GM12878 (cell line): ENCODE measurements at regions of chr1 and their contacts with region 1.

Region 1: GRCh38 chr1:27671964-27672749 is at the start of gene IFI6:
- DNase-seq: peak; percentile 86
- ATAC-seq: peak; percentile 94
- H3K4me3 ChIP-seq: peak within 1 kb of the TSS; percentile 89
- H3K27ac ChIP-seq: peak within 1 kb of the TSS; percentile 73
- H3K4me1 ChIP-seq: peaks cover 9% of the 10 kb centered on the region
- H3K27me3 ChIP-seq: no peaks in the 10 kb centered on the region
- CTCF ChIP-seq: peak; percentile 35 to 39 (median 38); a peak in 3 of 6 replicates
- EP300 ChIP-seq: no peak
- POLR2A ChIP-seq: peak; percentile 91
- RAD21 ChIP-seq: no peak
- polyA plus RNA-seq, gene IFI6: 5.6 to 21.0 TPM

Region 2: DNA sequence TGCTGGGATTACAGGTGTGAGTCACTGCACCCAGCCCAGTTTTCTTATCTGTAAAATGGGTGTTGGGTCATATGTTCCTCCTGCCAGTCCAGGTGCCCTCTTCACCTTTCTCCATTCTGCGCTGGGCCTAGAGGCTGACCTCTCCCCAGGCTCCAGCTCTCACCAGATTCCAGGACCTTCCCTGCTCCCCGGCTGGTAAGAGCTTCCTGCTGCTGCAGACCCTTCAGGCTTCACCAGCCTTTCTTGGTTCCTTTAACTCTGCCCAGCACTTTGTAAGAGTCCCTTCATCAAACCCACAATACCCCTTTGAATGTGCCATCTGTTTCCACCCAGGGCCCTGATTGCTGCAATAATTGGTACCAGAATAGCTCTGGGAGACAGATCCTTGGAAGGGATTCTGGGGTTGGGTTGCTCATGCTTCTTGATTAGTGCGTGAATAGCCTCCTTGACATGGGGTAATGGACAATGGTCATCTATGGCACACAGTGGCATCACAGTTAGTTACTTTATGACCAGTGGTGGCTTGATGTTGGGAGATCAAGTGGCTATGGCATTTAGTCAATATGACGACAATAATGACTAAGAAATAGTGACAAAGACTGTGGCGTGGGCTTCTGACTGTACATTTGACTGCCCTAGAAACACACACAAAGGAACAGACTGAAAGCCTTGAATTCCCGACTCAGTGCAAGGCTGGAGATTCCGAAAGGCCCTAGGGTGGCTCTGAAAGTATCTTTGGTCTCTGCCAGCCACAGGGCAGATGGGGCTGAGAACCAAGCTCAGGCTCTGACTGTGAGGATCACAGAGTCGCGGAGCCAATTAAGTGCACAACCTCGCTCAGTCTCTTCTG is 584.6 kb before region 1 on chr1:
- CTCF ChIA-PET with region 1: no interaction called
- POLR2A ChIA-PET with region 1: no interaction called
- RAD21 ChIA-PET with region 1: no interaction called
- SMC1A ChIA-PET with region 1: no interaction called
- in situ Hi-C with region 1: no loop called
- intact Hi-C with region 1: no loop called
- DNase-seq: no peak
- ATAC-seq: no peak
- H3K4me3 ChIP-seq: no peak overlapping the region
- H3K27ac ChIP-seq: no peak overlapping the region
- H3K4me1 ChIP-seq: no peaks in the 10 kb centered on the region
- H3K27me3 ChIP-seq: 0 out of 4 replicates have a peak, but pooled peaks cover 0 to 2% of the 10 kb centered on the region in 2 experiments
- CTCF ChIP-seq: no peak
- EP300 ChIP-seq: no peak
- POLR2A ChIP-seq: no peak
- RAD21 ChIP-seq: no peak

Region 3: DNA sequence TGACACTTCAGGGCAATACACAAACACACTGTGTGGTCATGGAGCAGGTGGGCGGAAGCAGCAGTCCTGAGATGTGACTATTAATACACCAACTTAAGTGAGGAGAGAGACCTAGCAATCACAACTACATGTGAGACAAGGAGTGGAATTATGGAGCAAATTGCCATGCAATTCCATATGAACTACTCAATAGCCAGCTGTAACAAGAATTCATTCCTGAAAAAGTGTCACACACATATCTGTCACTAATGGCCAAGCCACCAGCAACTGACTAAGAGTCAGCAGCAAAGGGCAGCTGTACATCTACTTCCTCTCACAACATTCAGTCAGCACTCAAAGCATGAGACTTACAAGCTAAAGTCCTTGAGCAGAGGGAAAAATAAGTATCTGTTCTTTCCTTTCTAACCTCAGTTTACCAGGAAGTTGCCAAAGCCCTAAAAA is 233.5 kb before region 1 on chr1:
- CTCF ChIA-PET with region 1: no interaction called
- POLR2A ChIA-PET with region 1: no interaction called
- RAD21 ChIA-PET with region 1: no interaction called
- SMC1A ChIA-PET with region 1: no interaction called
- in situ Hi-C with region 1: no loop called
- intact Hi-C with region 1: no loop called
- DNase-seq: no peak
- ATAC-seq: peak; percentile 42
- H3K4me3 ChIP-seq: peak overlapping the region; percentile 24
- H3K27ac ChIP-seq: peak overlapping the region; percentile 82
- H3K4me1 ChIP-seq: peaks cover 75% of the 10 kb centered on the region
- H3K27me3 ChIP-seq: no peaks in the 10 kb centered on the region
- CTCF ChIP-seq: no peak
- EP300 ChIP-seq: no peak
- POLR2A ChIP-seq: no peak
- RAD21 ChIP-seq: no peak

Region 4: DNA sequence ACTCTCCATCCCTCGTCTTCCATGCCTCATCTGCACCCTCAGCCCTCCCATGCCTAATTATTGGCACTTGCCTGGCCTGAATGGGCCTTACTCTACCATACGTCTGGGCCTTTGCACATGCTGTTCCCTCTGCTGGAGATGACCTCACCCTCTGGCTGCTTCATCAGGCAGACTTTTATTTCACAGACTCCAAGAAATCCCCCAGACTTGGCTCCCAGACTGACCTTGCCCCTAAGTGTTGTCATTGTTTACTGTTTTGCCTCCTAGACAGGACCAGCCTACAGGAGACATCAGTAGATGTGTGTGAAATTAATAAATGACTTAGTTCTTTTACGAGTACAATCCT is 63.0 kb before region 1 on chr1:
- CTCF ChIA-PET with region 1: interaction called, 327 read pairs
- POLR2A ChIA-PET with region 1: interaction called, 8 read pairs
- RAD21 ChIA-PET with region 1: interaction called, 268 read pairs
- SMC1A ChIA-PET with region 1: interaction called, 248 read pairs
- in situ Hi-C with region 1: no loop called
- intact Hi-C with region 1: no loop called
- DNase-seq: no peak
- ATAC-seq: peak; percentile 41
- H3K4me3 ChIP-seq: no peak overlapping the region
- H3K27ac ChIP-seq: peak overlapping the region; percentile 78
- H3K4me1 ChIP-seq: peaks cover 46% of the 10 kb centered on the region
- H3K27me3 ChIP-seq: no peaks in the 10 kb centered on the region
- CTCF ChIP-seq: no peak
- EP300 ChIP-seq: no peak
- POLR2A ChIP-seq: peak; percentile 57; the same call in 1 of the 2 replicates
- RAD21 ChIP-seq: no peak

Region 5: GRCh38 chr1:27689423-27690173 is 17.4 kb after region 1 on chr1:
- CTCF ChIA-PET with region 1: interaction called, 14 read pairs
- POLR2A ChIA-PET with region 1: interaction called, 9 read pairs
- RAD21 ChIA-PET with region 1: interaction called, 11 read pairs
- SMC1A ChIA-PET with region 1: interaction called, 11 read pairs
- in situ Hi-C with region 1: no loop called
- intact Hi-C with region 1: no loop called
- DNase-seq: peak; percentile 60
- ATAC-seq: peak; percentile 88
- H3K4me3 ChIP-seq: peak overlapping the region; percentile 33; the same call in 1 of the 2 replicates
- H3K27ac ChIP-seq: peak overlapping the region; percentile 57
- H3K4me1 ChIP-seq: peaks cover 10% of the 10 kb centered on the region
- H3K27me3 ChIP-seq: no peaks in the 10 kb centered on the region
- CTCF ChIP-seq: no peak
- EP300 ChIP-seq: peak in 1 of 2 experiments; percentile 13; a peak in 1 of 4 replicates
- POLR2A ChIP-seq: no peak
- RAD21 ChIP-seq: no peak

Region 6: GRCh38 chr1:27719286-27720251 is 47.4 kb after region 1 on chr1:
- CTCF ChIA-PET with region 1: interaction called, 63 read pairs
- POLR2A ChIA-PET with region 1: interaction called, 10 read pairs
- RAD21 ChIA-PET with region 1: interaction called, 51 read pairs
- SMC1A ChIA-PET with region 1: interaction called, 18 read pairs
- in situ Hi-C with region 1: loop called (anchors 5 kb)
- intact Hi-C with region 1: loop called (anchors 2 kb)
- DNase-seq: no peak
- ATAC-seq: peak; percentile 74
- H3K4me3 ChIP-seq: no peak overlapping the region
- H3K27ac ChIP-seq: no peak overlapping the region
- H3K4me1 ChIP-seq: no peaks in the 10 kb centered on the region
- H3K27me3 ChIP-seq: no peaks in the 10 kb centered on the region; a peak in 1 of 4 replicates
- CTCF ChIP-seq: peak; percentile 37 to 44 (median 42); a peak in 5 of 6 replicates
- EP300 ChIP-seq: no peak
- POLR2A ChIP-seq: no peak
- RAD21 ChIP-seq: peak; percentile 61

Region 7: GRCh38 chr1:27725374-27726173 is 53.4 kb after region 1 on chr1 and contains the start of gene FAM76A:
- CTCF ChIA-PET with region 1: interaction called, 63 read pairs
- POLR2A ChIA-PET with region 1: interaction called, 10 read pairs
- RAD21 ChIA-PET with region 1: interaction called, 51 read pairs
- SMC1A ChIA-PET with region 1: interaction called, 18 read pairs
- in situ Hi-C with region 1: loop called (anchors 5 kb)
- intact Hi-C with region 1: loop called (anchors 2 kb)
- DNase-seq: peak; percentile 97
- ATAC-seq: peak; percentile 98
- H3K4me3 ChIP-seq: peak within 1 kb of the TSS; percentile 77
- H3K27ac ChIP-seq: peak within 1 kb of the TSS; percentile 73
- H3K4me1 ChIP-seq: peaks cover 11% of the 10 kb centered on the region
- H3K27me3 ChIP-seq: no peaks in the 10 kb centered on the region
- CTCF ChIP-seq: peak; percentile 37 to 75 (median 39); a peak in 4 of 6 replicates
- EP300 ChIP-seq: no peak
- POLR2A ChIP-seq: peak; percentile 82
- RAD21 ChIP-seq: no peak; the same call in 1 of the 2 replicates
- polyA plus RNA-seq, gene FAM76A: 7.6 to 13.4 TPM

Region 8: GRCh38 chr1:27772933-27773825 is 101.0 kb after region 1 on chr1 and contains the start of gene STX12:
- CTCF ChIA-PET with region 1: interaction called, 33 read pairs
- POLR2A ChIA-PET with region 1: interaction called, 11 read pairs
- RAD21 ChIA-PET with region 1: interaction called, 41 read pairs
- SMC1A ChIA-PET with region 1: interaction called, 11 read pairs
- in situ Hi-C with region 1: no loop called
- intact Hi-C with region 1: loop called (anchors 5 kb)
- DNase-seq: peak; percentile 100
- ATAC-seq: peak; percentile 93
- H3K4me3 ChIP-seq: peak within 1 kb of the TSS; percentile 81
- H3K27ac ChIP-seq: peak within 1 kb of the TSS; percentile 89
- H3K4me1 ChIP-seq: peaks cover 6% of the 10 kb centered on the region
- H3K27me3 ChIP-seq: no peaks in the 10 kb centered on the region
- CTCF ChIP-seq: no peak
- EP300 ChIP-seq: no peak
- POLR2A ChIP-seq: peak; percentile 87
- RAD21 ChIP-seq: no peak
- polyA plus RNA-seq, gene STX12: 23.5 to 26.9 TPM

Region 9: GRCh38 chr1:27830621-27831424 is 158.7 kb after region 1 on chr1 and contains the start of gene PPP1R8:
- CTCF ChIA-PET with region 1: interaction called, 32 read pairs
- POLR2A ChIA-PET with region 1: interaction called, 4 read pairs
- RAD21 ChIA-PET with region 1: interaction called, 6 read pairs
- SMC1A ChIA-PET with region 1: interaction called, 6 read pairs
- in situ Hi-C with region 1: no loop called
- intact Hi-C with region 1: loop called (anchors 5 kb)
- DNase-seq: peak; percentile 72
- ATAC-seq: peak; percentile 99
- H3K4me3 ChIP-seq: peak within 1 kb of the TSS; percentile 90
- H3K27ac ChIP-seq: peak within 1 kb of the TSS; percentile 87
- H3K4me1 ChIP-seq: no peaks in the 10 kb centered on the region
- H3K27me3 ChIP-seq: no peaks in the 10 kb centered on the region
- CTCF ChIP-seq: no peak
- EP300 ChIP-seq: 0 out of 4 replicates have a peak, but pooled peaks of 1 of the 2 experiments have one; percentile 8
- POLR2A ChIP-seq: peak; percentile 97
- RAD21 ChIP-seq: no peak
- polyA plus RNA-seq, gene PPP1R8: 14.5 to 15.3 TPM

Region 10: DNA sequence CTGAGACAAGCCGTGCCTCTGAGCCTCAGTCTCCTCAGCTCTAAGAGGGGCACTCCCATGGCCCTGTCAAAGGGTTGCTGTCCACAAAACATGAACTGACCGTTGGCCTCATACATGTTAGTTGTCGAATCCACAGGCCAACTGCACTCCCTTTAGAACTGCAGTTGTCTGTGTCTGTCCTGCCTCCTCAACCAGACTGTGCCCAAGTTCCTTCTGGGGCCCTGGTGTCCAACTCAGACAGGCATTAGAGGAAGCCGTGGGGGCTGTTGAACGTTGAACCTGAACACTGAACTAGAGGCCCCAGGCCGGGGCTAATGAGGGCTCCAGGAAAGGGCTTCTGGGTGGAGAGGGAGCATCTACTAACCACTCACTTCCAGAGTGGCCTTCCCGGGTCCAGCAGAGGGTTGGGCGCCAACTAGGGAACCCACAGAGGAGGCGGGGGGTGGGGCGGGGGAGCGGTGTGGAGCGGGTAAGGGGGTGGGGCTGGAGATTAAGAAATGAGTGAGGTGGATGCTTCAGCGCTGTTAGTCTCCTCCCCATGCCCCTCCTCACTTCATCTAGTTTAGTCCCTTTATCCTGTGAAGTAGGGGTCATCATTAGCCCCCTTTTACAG is 919.7 kb after region 1 on chr1 and contains the start of gene RAB42:
- CTCF ChIA-PET with region 1: no interaction called
- POLR2A ChIA-PET with region 1: no interaction called
- RAD21 ChIA-PET with region 1: no interaction called
- SMC1A ChIA-PET with region 1: no interaction called
- in situ Hi-C with region 1: no loop called
- intact Hi-C with region 1: no loop called
- DNase-seq: no peak
- ATAC-seq: peak; percentile 70
- H3K4me3 ChIP-seq: peak within 1 kb of the TSS; percentile 51; the same call in 1 of the 2 replicates
- H3K27ac ChIP-seq: no peak within 1 kb of the TSS
- H3K4me1 ChIP-seq: peaks cover under 1% of the 10 kb centered on the region
- H3K27me3 ChIP-seq: no peaks in the 10 kb centered on the region
- CTCF ChIP-seq: no peak
- EP300 ChIP-seq: no peak
- POLR2A ChIP-seq: no peak
- RAD21 ChIP-seq: no peak
- polyA plus RNA-seq, gene RAB42: 0.16 to 0.21 TPM

Region 11: DNA sequence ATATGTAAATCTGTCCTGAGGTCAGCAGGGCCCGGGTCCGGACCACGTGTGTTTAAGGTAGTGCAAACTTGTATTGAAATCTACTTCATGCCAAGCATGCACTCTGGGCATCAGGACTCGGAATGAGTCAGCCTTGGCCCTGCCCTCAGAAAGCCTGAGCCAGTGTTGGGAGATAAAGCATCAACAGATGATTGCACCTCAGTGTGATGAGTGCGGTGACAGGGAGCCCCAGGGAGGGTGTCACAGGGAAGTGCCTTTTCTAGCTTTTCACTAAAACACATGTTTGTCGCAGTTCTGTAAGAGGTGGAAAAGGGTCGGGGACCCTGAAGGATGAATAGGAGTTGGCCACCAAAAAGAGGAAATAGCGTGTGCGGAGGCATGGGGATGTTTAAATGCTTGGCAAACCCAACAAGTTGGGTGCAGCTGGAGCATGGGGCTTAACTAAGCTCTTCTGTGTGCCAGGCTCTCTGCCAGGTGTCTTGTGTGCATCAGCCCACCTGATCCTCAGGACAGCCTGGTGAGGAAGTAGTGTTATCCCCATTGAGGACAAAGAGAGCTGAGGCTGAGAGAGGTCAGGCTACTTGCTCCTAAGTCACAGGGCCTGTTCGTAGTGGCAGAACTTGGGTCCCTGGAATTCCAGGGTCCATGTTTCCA is 1194.0 kb after region 1 on chr1:
- CTCF ChIA-PET with region 1: no interaction called
- POLR2A ChIA-PET with region 1: no interaction called
- RAD21 ChIA-PET with region 1: no interaction called
- SMC1A ChIA-PET with region 1: no interaction called
- in situ Hi-C with region 1: no loop called
- intact Hi-C with region 1: no loop called
- DNase-seq: no peak
- ATAC-seq: peak; percentile 31; the same call in 2 of the 3 replicates
- H3K4me3 ChIP-seq: no peak overlapping the region
- H3K27ac ChIP-seq: no peak overlapping the region
- H3K4me1 ChIP-seq: no peaks in the 10 kb centered on the region
- H3K27me3 ChIP-seq: no peaks in the 10 kb centered on the region; a peak in 1 of 4 replicates
- CTCF ChIP-seq: no peak
- EP300 ChIP-seq: no peak
- POLR2A ChIP-seq: no peak
- RAD21 ChIP-seq: no peak